ENCODE measurements at regions of chr7 and their contacts with region 1.

Region 1: DNA sequence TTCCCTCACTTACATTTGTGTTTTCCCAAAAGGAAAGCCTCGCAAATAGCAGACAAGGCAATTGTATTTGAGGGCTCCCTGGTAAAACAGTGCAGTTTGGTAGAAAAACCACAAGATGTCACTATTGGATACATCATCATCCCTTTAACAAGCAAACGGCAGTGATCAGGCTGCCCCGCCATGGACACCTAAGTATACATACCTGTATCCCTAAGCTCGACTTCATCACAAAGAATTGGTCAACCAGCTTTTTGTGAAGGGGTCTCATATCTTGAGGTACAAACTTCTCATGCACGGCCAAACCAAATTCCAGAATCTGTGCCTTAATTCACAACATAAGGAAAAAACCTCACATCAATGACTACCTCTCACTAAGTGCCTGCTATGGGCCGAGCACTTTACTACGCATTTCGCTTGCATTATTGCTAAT is 179.5 kb upstream of the IMMP2L start:
- DNase-seq: peak; percentile 67
- ATAC-seq: peak; percentile 69
- H3K4me3 ChIP-seq: no peak overlapping the region
- H3K4me3 Mint-ChIP-seq: no peak overlapping the region
- H3K27ac ChIP-seq: no peak overlapping the region
- H3K27ac Mint-ChIP-seq: no peak overlapping the region
- H3K4me1 ChIP-seq: no peaks in the 10 kb centered on the region
- H3K4me1 Mint-ChIP-seq: no peaks in the 10 kb centered on the region
- H3K27me3 ChIP-seq: no peaks in the 10 kb centered on the region
- H3K27me3 Mint-ChIP-seq: peaks cover 5% of the 10 kb centered on the region
- CTCF ChIP-seq: peak; percentile 80

Region 2: DNA sequence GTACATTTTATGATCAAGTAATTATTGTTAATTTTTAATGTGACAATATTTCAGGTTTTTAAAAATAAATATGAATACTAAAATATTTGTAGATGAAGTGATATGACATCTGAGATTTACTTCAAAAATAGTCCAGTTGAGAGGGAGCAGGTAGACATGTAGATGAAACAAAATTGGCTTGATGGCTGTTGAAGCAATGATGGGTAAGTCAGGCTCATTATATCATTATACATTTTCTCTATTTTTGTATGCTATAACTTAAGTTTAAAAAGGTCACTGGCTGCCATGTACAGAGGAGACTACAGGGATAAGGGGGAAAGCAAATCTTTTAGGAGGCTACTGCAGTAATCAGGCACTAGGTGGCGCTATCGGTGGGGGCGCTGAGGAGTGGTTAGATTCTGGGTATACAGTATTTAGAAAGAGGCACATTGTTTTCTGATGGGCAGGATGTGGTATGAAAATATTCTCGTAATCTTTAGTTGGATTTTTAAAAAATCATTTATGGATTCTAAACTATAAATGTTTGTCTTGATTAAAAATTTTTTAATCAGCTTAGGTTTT is 10.3 kb after region 1 on chr7:
- CTCF ChIA-PET with region 1: interaction called, 16 read pairs
- POLR2A ChIA-PET with region 1: no interaction called
- intact Hi-C with region 1: no loop called
- DNase-seq: peak; percentile 46
- ATAC-seq: peak; percentile 41
- H3K4me3 ChIP-seq: no peak overlapping the region
- H3K4me3 Mint-ChIP-seq: no peak overlapping the region
- H3K27ac ChIP-seq: no peak overlapping the region
- H3K27ac Mint-ChIP-seq: no peak overlapping the region
- H3K4me1 ChIP-seq: no peaks in the 10 kb centered on the region
- H3K4me1 Mint-ChIP-seq: no peaks in the 10 kb centered on the region
- H3K27me3 ChIP-seq: no peaks in the 10 kb centered on the region
- H3K27me3 Mint-ChIP-seq: peaks cover 11% of the 10 kb centered on the region
- CTCF ChIP-seq: peak; percentile 74

Region 3: DNA sequence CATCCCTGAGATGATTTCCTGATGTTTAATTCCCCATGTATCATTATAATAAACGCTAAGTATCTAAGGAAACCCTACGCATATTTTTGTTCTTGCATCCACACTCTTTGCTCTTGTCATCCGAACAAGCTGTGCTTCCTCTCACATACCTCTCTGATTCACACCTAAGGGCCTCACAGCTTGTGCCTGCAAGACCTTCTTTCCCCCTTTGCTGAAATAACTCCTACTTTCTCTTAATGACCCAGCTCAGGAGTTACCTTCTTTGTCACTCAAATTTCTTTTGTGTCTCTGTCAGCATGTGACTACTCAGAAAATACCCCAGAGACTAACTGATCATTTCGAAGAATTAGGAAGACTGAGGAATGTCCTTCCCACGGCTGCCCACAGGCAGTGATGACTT is 29.8 kb after region 1 on chr7:
- CTCF ChIA-PET with region 1: no interaction called
- POLR2A ChIA-PET with region 1: no interaction called
- intact Hi-C with region 1: no loop called
- DNase-seq: no peak
- ATAC-seq: no peak
- H3K4me3 ChIP-seq: no peak overlapping the region
- H3K4me3 Mint-ChIP-seq: no peak overlapping the region
- H3K27ac ChIP-seq: no peak overlapping the region
- H3K27ac Mint-ChIP-seq: no peak overlapping the region
- H3K4me1 ChIP-seq: no peaks in the 10 kb centered on the region
- H3K4me1 Mint-ChIP-seq: no peaks in the 10 kb centered on the region
- H3K27me3 ChIP-seq: no peaks in the 10 kb centered on the region
- H3K27me3 Mint-ChIP-seq: peaks cover 8% of the 10 kb centered on the region
- CTCF ChIP-seq: no peak

Region 4: GRCh38 chr7:111803015-111803758 is 61.4 kb after region 1 on chr7:
- CTCF ChIA-PET with region 1: no interaction called
- POLR2A ChIA-PET with region 1: no interaction called
- intact Hi-C with region 1: no loop called
- DNase-seq: no peak
- ATAC-seq: no peak
- H3K4me3 ChIP-seq: no peak overlapping the region
- H3K4me3 Mint-ChIP-seq: no peak overlapping the region
- H3K27ac ChIP-seq: no peak overlapping the region
- H3K27ac Mint-ChIP-seq: no peak overlapping the region
- H3K4me1 ChIP-seq: no peaks in the 10 kb centered on the region
- H3K4me1 Mint-ChIP-seq: no peaks in the 10 kb centered on the region
- H3K27me3 ChIP-seq: no peaks in the 10 kb centered on the region
- H3K27me3 Mint-ChIP-seq: no peaks in the 10 kb centered on the region
- CTCF ChIP-seq: no peak

Region 5: GRCh38 chr7:112414855-112415490 is 673.1 kb after region 1 on chr7:
- CTCF ChIA-PET with region 1: interaction called, 7 read pairs
- POLR2A ChIA-PET with region 1: no interaction called
- intact Hi-C with region 1: loop called (anchors 1 kb)
- DNase-seq: peak; percentile 19
- ATAC-seq: no peak
- H3K4me3 ChIP-seq: no peak overlapping the region
- H3K4me3 Mint-ChIP-seq: no peak overlapping the region
- H3K27ac ChIP-seq: no peak overlapping the region
- H3K27ac Mint-ChIP-seq: no peak overlapping the region
- H3K4me1 ChIP-seq: no peaks in the 10 kb centered on the region
- H3K4me1 Mint-ChIP-seq: no peaks in the 10 kb centered on the region
- H3K27me3 ChIP-seq: peaks cover 0 to 2% (median under 1%) of the 10 kb centered on the region in 4 experiments
- H3K27me3 Mint-ChIP-seq: peaks cover 21% of the 10 kb centered on the region
- CTCF ChIP-seq: peak; percentile 55

Region 6: DNA sequence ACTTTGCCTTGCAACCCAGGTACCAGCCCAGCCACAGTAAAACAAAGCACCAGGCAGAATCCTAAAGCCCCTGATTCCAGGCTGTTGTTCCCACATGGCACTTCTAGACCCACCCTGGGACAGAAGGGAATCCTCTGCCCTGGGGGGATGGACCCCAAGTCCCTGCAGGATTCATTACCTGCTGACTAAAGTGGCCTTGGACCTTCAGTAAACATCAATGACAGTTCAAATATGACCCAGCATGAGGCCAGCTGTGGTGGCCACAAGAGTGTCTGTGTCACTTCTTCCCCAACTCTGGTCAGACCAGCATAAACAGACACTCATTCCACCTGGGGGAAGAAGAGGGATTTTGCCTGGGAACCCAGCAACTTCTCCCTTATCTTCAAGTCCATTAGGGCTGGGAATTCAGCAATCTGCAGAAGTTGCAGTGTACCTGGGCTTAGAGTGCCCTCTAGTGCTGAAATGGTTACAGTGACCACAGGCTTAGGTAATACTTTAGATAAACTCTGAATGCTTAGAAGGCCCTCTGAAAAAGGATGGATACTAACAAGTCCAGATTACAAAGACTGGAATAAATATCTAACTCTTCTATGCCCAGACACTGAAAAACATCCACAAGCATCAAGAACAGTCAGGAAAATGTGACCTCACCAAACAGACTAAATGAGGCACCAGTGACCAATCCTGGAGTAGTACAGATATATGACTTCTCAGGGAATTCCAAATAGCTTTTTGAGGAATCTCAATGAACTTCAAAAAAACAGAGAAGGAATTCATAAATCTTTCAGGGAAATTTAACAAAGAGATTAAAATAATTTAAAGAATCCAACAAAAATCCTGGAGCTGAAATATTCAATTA is 1156.8 kb after region 1 on chr7:
- CTCF ChIA-PET with region 1: interaction called, 3 read pairs
- POLR2A ChIA-PET with region 1: no interaction called
- intact Hi-C with region 1: loop called (anchors 5 kb)
- DNase-seq: peak; percentile 70
- ATAC-seq: peak; percentile 54
- H3K4me3 ChIP-seq: no peak overlapping the region
- H3K4me3 Mint-ChIP-seq: no peak overlapping the region
- H3K27ac ChIP-seq: no peak overlapping the region
- H3K27ac Mint-ChIP-seq: no peak overlapping the region
- H3K4me1 ChIP-seq: no peaks in the 10 kb centered on the region
- H3K4me1 Mint-ChIP-seq: peaks cover 8% of the 10 kb centered on the region
- H3K27me3 ChIP-seq: no peaks in the 10 kb centered on the region
- H3K27me3 Mint-ChIP-seq: no peaks in the 10 kb centered on the region
- CTCF ChIP-seq: peak; percentile 91

Region 7: GRCh38 chr7:113710310-113711106 is 1968.7 kb after region 1 on chr7:
- CTCF ChIA-PET with region 1: no interaction called
- POLR2A ChIA-PET with region 1: no interaction called
- intact Hi-C with region 1: loop called (anchors 10 kb)
- DNase-seq: peak; percentile 66
- ATAC-seq: peak; percentile 69
- H3K4me3 ChIP-seq: no peak overlapping the region
- H3K4me3 Mint-ChIP-seq: no peak overlapping the region
- H3K27ac ChIP-seq: no peak overlapping the region
- H3K27ac Mint-ChIP-seq: no peak overlapping the region
- H3K4me1 ChIP-seq: no peaks in the 10 kb centered on the region
- H3K4me1 Mint-ChIP-seq: no peaks in the 10 kb centered on the region
- H3K27me3 ChIP-seq: no peaks in the 10 kb centered on the region
- H3K27me3 Mint-ChIP-seq: no peaks in the 10 kb centered on the region
- CTCF ChIP-seq: peak; percentile 99

Measured in B cell (primary cell).